Sciatic nerve (tissue), 2 donors: ENCODE measurements at regions of chr14 and their contacts with region 1.

Region 1: GRCh38 chr14:60622917-60623257 is 26.4 kb downstream of the SIX1 start:
- DNase-seq: no peak
- ATAC-seq: peak; percentile 88

Region 2: GRCh38 chr14:60679566-60680258 is 56.8 kb after region 1 on chr14:
- intact Hi-C with region 1: no loop called
- DNase-seq: no peak
- ATAC-seq: no peak

Region 3: DNA sequence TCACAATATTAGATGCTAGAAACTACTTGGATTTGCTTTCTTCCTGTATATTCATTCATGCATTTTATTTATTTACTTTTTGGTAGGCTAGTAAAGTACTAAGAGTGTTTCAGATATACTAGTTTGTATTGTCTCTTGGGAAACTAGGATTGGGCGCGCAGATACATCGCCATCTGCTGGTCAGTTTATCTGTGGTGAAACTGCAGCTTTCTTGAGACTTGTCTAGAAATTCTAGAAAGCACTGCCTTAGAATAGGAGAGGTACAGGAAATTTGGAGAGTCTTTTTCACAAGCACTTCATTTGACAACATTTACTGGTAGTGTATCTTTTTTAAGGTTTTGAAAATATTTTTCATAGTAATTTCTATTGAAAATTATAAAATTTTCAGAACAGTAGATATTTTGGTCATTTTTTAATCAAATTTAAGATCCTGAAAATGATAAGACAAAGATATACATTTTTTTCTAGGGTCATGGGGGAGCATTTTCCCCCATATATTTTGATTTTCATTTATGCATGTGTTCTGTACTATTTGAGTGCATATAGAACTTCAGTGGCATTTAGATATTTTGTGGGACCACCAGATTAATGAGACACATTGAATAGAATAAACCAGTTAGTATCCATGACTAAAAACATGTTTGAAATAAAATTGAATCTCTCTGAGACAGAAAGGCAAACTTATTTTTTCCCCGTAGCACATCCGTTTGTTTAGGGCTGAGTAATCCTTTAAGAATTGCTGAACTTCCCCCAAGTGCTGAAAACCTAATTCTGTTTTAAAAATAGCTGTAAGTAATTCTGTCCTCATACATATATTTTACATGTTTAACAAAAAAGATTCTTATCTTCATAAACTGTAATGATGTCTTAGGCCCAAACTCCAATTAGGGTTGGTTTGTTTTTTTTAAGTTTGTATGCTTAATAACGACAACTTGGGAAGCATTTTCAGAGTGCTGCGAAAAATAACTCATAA is 402.6 kb after region 1 on chr14:
- intact Hi-C with region 1: loop called (anchors 10 kb)
- DNase-seq: peak; percentile 75
- ATAC-seq: peak; percentile 78

Region 4: GRCh38 chr14:61252369-61253063 is 629.6 kb after region 1 on chr14:
- intact Hi-C with region 1: loop called (anchors 5 kb)
- DNase-seq: peak; percentile 82
- ATAC-seq: peak; percentile 98